A673 (cell line): ENCODE measurements at regions of chr12 and their contacts with region 1.

Region 1: DNA sequence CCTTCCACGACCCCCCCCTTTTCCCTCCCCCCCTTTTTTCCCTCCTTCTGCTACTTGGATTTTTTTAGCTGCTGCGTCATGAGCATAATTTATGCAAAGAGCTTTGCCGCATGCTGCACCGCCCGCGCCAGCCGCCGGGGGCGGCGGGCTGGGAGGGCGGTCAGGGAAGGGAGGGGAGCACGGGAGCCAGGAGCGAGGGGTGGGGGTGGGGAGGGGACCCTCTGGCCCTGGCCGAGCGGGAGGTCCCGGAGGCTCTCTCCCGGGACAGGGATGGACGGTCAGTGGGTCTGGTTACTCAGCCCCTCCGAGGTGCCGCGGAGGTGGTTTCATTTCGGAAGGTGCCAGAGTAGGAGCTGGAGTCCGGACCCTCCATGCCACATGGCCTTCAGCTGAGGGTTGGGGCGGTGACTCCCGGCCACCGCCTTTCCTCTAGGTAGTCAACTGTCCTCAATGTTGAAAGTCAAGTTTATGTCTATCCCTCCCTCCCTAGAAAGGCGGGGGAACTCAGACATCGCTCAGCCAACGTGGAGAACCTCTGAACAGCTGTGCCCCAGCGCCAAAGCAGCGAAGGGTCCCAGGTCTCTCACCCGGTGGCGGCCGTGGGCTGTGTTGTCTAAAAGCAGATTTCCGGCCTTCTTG is at the start of gene POU6F1:
- DNase-seq: peak; percentile 93
- H3K4me3 ChIP-seq: peak within 1 kb of the TSS; percentile 86
- H3K27ac ChIP-seq: peak within 1 kb of the TSS; percentile 97
- H3K4me1 ChIP-seq: peaks cover 7% of the 10 kb centered on the region
- H3K27me3 ChIP-seq: no peaks in the 10 kb centered on the region
- CTCF ChIP-seq: peak; percentile 54
- total RNA-seq, gene POU6F1: 13.5 and 13.6 TPM in 2 replicates

Region 2: DNA sequence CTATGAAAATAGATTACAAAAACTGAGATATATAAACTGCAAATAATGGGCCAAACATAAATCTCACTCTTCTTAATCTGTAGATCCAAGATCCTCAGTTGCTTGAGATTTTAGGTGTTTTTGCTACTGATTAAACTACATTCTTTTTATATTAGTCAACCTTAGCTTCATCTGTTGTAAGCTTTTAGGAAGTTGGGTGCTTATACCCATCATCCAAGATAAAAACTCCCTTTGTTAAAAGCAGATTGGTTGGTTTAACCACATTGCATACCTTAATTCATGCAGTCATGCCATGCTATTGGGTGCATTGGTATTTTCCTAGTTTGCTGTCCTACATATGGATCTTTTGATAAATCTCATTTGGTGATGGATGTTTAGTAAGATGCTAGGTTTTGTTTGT is 759.5 kb before region 1 on chr12:
- CTCF ChIA-PET with region 1: no interaction called
- POLR2A ChIA-PET with region 1: no interaction called
- intact Hi-C with region 1: no loop called
- DNase-seq: no peak
- H3K4me3 ChIP-seq: no peak overlapping the region
- H3K27ac ChIP-seq: no peak overlapping the region
- H3K4me1 ChIP-seq: peaks cover 3% of the 10 kb centered on the region
- H3K27me3 ChIP-seq: no peaks in the 10 kb centered on the region
- CTCF ChIP-seq: no peak

Region 3: GRCh38 chr12:51205350-51205749 is 12.7 kb before region 1 on chr12:
- CTCF ChIA-PET with region 1: no interaction called
- POLR2A ChIA-PET with region 1: interaction called, 17 read pairs
- intact Hi-C with region 1: no loop called
- DNase-seq: no peak
- H3K4me3 ChIP-seq: no peak overlapping the region
- H3K27ac ChIP-seq: no peak overlapping the region
- H3K4me1 ChIP-seq: no peaks in the 10 kb centered on the region
- H3K27me3 ChIP-seq: no peaks in the 10 kb centered on the region
- CTCF ChIP-seq: no peak

Region 4: DNA sequence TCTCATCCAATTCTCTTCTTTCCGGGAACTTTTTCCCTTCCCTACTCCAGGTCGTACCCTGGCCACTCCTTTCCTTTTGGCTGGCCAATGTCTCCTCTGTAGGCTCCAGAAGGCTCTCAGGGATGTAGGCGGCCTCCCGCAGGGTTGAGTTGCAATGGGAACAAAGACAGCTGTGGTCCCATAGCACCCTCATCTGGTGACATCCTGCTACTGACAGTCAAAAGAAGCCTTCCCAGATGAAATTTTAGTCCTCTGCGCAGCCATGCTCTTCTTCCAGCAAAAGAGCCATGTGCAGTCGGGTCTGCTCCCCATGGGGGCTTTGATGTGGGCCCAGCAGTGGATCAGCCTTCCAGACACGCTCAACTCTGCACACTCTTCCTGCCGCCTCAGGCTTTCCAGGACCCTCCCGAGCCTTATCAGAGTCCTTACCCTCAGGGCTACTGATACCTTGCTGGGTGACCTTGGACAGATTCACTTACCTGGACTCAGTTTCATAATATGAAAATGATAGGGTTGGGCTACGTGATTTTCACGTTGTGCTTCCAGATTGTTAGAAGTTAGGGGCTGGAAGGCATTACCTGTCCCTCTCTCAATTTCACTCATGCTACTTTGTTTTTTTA is 133.9 kb after region 1 on chr12:
- CTCF ChIA-PET with region 1: no interaction called
- POLR2A ChIA-PET with region 1: interaction called, 17 read pairs
- intact Hi-C with region 1: no loop called
- DNase-seq: peak; percentile 65
- H3K4me3 ChIP-seq: no peak overlapping the region
- H3K27ac ChIP-seq: no peak overlapping the region
- H3K4me1 ChIP-seq: no peaks in the 10 kb centered on the region
- H3K27me3 ChIP-seq: no peaks in the 10 kb centered on the region
- CTCF ChIP-seq: peak; percentile 78

Region 5: DNA sequence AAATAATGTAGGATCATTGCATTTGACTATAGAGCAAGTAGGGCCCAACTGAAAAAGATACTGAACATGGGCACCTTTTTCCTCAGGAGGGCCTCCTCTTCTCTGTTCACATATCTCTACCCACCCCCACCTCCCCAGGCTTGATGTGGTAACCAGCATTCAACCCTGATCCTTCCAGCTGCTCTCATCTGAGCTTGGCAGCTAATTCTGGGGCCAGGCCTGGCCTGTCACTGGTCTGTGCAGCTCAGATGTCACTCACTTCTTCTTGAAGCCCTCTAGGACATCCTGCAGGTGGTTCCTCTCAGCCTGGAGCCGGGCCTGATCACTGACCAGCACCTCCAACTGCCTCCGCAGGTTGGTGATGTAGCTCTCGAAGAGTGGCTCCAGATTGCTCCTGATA is 1165.2 kb after region 1 on chr12:
- CTCF ChIA-PET with region 1: no interaction called
- POLR2A ChIA-PET with region 1: interaction called, 10 read pairs
- intact Hi-C with region 1: no loop called
- DNase-seq: no peak
- H3K4me3 ChIP-seq: no peak overlapping the region
- H3K27ac ChIP-seq: no peak overlapping the region
- H3K4me1 ChIP-seq: no peaks in the 10 kb centered on the region
- H3K27me3 ChIP-seq: peaks cover 7% of the 10 kb centered on the region
- CTCF ChIP-seq: no peak